Caco-2 (cell line): ENCODE measurements at regions of chr3 and their contacts with region 1.

Region 1: GRCh38 chr3:97927654-97928053 is 44.6 kb downstream of the RIOX2 start:
- DNase-seq: peak in 1 of 2 experiments; percentile 30
- H3K4me3 ChIP-seq: no peak overlapping the region
- H3K4me3 Mint-ChIP-seq: no peak overlapping the region
- H3K27ac Mint-ChIP-seq: no peak overlapping the region
- H3K4me1 ChIP-seq: peaks cover 17% of the 10 kb centered on the region
- H3K4me1 Mint-ChIP-seq: peaks cover 15% of the 10 kb centered on the region
- H3K27me3 ChIP-seq: no peaks in the 10 kb centered on the region
- H3K27me3 Mint-ChIP-seq: no peaks in the 10 kb centered on the region
- CTCF ChIP-seq: no peak

Region 2: GRCh38 chr3:97971677-97972567 is 44.3 kb after region 1 on chr3 and contains the start of gene RIOX2:
- CTCF ChIA-PET with region 1: no interaction called
- POLR2A ChIA-PET with region 1: no interaction called
- intact Hi-C with region 1: loop called (anchors 5 kb)
- DNase-seq: peak; percentile 76 to 78
- H3K4me3 ChIP-seq: peak within 1 kb of the TSS; percentile 81
- H3K4me3 Mint-ChIP-seq: peak within 1 kb of the TSS; percentile 88
- H3K27ac Mint-ChIP-seq: peak within 1 kb of the TSS; percentile 94
- H3K4me1 ChIP-seq: peaks cover 20% of the 10 kb centered on the region
- H3K4me1 Mint-ChIP-seq: peaks cover 13% of the 10 kb centered on the region
- H3K27me3 ChIP-seq: no peaks in the 10 kb centered on the region
- H3K27me3 Mint-ChIP-seq: no peaks in the 10 kb centered on the region
- CTCF ChIP-seq: peak in 1 of 2 experiments; percentile 12
- total RNA-seq, gene RIOX2: 25.0 TPM in 2 replicates